MCF 10A (cell line): ENCODE measurements at regions of chr1 and their contacts with region 1.

Region 1: GRCh38 chr1:170929835-170930554 is 5.3 kb upstream of the MROH9 start:
- DNase-seq: peak; percentile 83
- H3K4me3 Mint-ChIP-seq: no peak overlapping the region
- H3K27ac Mint-ChIP-seq: peak overlapping the region; percentile 4
- H3K4me1 Mint-ChIP-seq: peaks cover 12% of the 10 kb centered on the region
- H3K27me3 Mint-ChIP-seq: no peaks in the 10 kb centered on the region
- CTCF ChIP-seq: peak; percentile 78

Region 2: DNA sequence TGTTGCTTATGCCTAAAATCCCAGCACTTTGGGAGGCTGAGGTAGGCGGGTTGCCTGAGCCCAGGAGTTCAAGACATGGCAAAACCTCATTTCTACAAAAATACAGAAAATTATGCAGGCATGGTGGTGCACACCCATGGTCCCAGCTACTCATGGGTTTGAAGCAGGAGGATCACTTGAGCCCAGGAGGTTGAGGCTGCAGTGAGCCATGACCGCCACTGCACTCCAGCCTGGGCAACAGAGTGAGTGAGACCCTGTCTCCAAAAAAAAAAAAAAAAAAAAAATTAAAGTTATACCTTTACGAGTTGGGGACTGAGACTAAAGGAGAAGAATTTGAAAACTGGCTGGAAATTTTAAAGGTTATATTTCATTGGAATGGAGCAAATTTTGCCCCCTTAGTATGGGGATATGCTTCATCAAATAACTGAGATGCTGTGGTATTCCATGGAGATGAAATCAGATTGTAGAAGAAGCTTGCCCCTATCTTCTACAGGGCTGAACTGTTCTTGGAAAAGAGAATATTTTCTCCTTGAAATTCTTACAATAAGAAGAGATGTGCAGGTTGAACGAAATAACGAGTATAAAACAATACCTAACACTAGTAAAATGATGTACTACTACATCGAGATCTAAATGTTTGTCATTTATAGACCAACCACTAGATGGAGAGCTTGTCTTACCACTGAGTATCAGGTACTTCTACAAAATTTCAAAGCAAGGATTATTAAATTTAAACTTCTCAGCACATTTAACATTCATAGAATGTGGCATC is 1001.4 kb before region 1 on chr1:
- CTCF ChIA-PET with region 1: interaction called, 18 read pairs
- POLR2A ChIA-PET with region 1: no interaction called
- intact Hi-C with region 1: loop called (anchors 1 kb)
- DNase-seq: peak; percentile 67
- H3K4me3 Mint-ChIP-seq: no peak overlapping the region
- H3K27ac Mint-ChIP-seq: no peak overlapping the region
- H3K4me1 Mint-ChIP-seq: no peaks in the 10 kb centered on the region
- H3K27me3 Mint-ChIP-seq: no peaks in the 10 kb centered on the region
- CTCF ChIP-seq: peak; percentile 84

Region 3: DNA sequence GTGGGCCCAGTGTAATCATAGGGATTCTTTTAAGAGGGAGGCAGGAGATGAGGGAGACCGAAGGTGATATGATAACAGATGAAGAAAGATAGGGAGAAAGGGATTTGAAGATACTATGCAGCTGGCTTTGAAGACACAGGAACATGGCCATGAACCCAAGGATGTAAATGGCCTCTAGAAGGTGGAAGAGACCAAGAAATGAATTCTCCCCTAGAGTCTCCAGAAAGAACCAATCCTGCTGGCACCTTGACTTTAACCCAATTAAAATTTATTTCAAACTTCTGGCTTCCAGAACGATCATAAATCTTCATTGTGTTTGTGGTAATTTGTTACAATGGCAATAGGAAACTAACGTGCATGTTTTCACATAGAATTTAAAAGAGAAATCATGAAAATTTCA is 493.1 kb before region 1 on chr1:
- CTCF ChIA-PET with region 1: no interaction called
- POLR2A ChIA-PET with region 1: no interaction called
- intact Hi-C with region 1: loop called (anchors 5 kb)
- DNase-seq: no peak
- H3K4me3 Mint-ChIP-seq: no peak overlapping the region
- H3K27ac Mint-ChIP-seq: no peak overlapping the region
- H3K4me1 Mint-ChIP-seq: no peaks in the 10 kb centered on the region
- H3K27me3 Mint-ChIP-seq: no peaks in the 10 kb centered on the region
- CTCF ChIP-seq: no peak

Region 4: GRCh38 chr1:170765712-170766330 is 164.2 kb before region 1 on chr1:
- CTCF ChIA-PET with region 1: interaction called, 4 read pairs
- POLR2A ChIA-PET with region 1: no interaction called
- intact Hi-C with region 1: loop called (anchors 5 kb)
- DNase-seq: peak; percentile 54
- H3K4me3 Mint-ChIP-seq: no peak overlapping the region
- H3K27ac Mint-ChIP-seq: no peak overlapping the region
- H3K4me1 Mint-ChIP-seq: no peaks in the 10 kb centered on the region
- H3K27me3 Mint-ChIP-seq: no peaks in the 10 kb centered on the region
- CTCF ChIP-seq: peak; percentile 74

Region 5: DNA sequence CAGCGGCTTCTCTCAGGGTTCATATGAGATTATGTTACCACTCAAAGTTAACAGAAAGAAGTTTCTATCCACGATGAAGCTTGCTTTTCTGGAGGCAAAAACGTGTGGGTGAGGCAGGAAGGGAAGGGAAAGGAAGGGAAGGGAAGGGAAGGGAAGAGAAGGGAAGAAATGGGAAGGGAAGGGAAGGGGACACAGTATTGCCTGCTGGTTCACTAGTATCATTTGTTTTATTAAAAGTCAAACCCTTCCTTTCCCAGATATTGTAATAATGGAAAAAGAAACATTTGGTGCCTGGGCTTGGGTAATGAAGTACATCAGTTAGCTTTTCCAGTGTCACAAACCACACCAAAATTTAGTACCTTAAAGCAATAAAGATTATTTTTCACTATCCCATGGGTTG is 12.6 kb before region 1 on chr1:
- CTCF ChIA-PET with region 1: interaction called, 22 read pairs
- POLR2A ChIA-PET with region 1: no interaction called
- intact Hi-C with region 1: no loop called
- DNase-seq: no peak
- H3K4me3 Mint-ChIP-seq: no peak overlapping the region
- H3K27ac Mint-ChIP-seq: no peak overlapping the region
- H3K4me1 Mint-ChIP-seq: no peaks in the 10 kb centered on the region
- H3K27me3 Mint-ChIP-seq: no peaks in the 10 kb centered on the region
- CTCF ChIP-seq: no peak